PC-9 (cell line): ENCODE measurements at regions of chr1 and their contacts with region 1.

Region 1: GRCh38 chr1:70228670-70229069 is 7.5 kb downstream of the SRSF11 start:
- DNase-seq: no peak
- H3K4me3 ChIP-seq: no peak overlapping the region
- H3K27ac ChIP-seq: no peak overlapping the region
- H3K4me1 ChIP-seq: peaks cover 4% of the 10 kb centered on the region
- H3K27me3 ChIP-seq: no peaks in the 10 kb centered on the region
- CTCF ChIP-seq: no peak

Region 2: DNA sequence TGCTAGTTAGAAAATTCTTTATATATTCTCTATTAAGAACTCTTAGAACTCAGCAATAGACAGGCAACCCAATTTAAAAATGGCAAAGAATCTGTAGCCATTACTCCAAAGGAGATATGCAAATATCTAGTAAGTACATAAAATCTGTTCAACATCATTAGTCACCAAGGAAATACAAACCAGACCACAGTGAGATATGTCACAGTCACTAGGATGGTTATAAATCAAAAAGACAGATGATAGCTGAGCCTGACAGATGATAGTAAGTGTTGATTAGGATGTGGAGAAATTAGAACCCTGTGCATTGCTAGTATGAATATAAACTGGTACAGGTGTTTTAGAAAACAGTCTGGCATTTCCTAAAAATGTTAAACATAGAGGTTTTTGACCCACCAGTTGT is 19.1 kb after region 1 on chr1:
- CTCF ChIA-PET with region 1: no interaction called
- POLR2A ChIA-PET with region 1: no interaction called
- intact Hi-C with region 1: loop called (anchors 2 kb)
- DNase-seq: no peak
- H3K4me3 ChIP-seq: no peak overlapping the region
- H3K27ac ChIP-seq: no peak overlapping the region
- H3K4me1 ChIP-seq: no peaks in the 10 kb centered on the region
- H3K27me3 ChIP-seq: no peaks in the 10 kb centered on the region
- CTCF ChIP-seq: no peak

Region 3: DNA sequence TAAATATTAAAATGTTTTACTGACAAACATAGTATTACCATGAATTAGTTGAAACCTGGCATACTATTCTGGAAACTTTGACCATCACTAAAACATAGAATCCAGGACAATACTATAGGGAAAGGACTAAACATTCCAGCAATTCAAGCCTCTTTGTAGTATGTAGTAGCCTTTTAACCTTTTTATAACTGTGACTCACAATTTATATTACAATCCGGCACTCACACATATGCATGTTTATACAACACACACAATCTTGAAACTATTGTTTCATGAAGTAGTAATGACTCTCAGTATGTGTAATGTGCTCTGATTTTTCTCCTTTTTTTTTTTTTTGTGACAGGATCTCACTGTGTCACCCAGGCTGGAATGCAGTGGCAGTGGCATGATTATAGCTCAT is 61.5 kb after region 1 on chr1:
- CTCF ChIA-PET with region 1: no interaction called
- POLR2A ChIA-PET with region 1: no interaction called
- intact Hi-C with region 1: no loop called
- DNase-seq: no peak
- H3K4me3 ChIP-seq: no peak overlapping the region
- H3K27ac ChIP-seq: no peak overlapping the region
- H3K4me1 ChIP-seq: no peaks in the 10 kb centered on the region
- H3K27me3 ChIP-seq: no peaks in the 10 kb centered on the region
- CTCF ChIP-seq: no peak